GM10248 (cell line): ENCODE measurements at regions of chr7 and their contacts with region 1.

Region 1: GRCh38 chr7:143901668-143902331 is at the start of gene TCAF1:
- DNase-seq: peak; percentile 97
- CTCF ChIP-seq: peak; percentile 30

Region 2: GRCh38 chr7:143733876-143734275 is 167.9 kb before region 1 on chr7:
- CTCF ChIA-PET with region 1: no interaction called
- POLR2A ChIA-PET with region 1: no interaction called
- DNase-seq: no peak
- CTCF ChIP-seq: no peak

Region 3: DNA sequence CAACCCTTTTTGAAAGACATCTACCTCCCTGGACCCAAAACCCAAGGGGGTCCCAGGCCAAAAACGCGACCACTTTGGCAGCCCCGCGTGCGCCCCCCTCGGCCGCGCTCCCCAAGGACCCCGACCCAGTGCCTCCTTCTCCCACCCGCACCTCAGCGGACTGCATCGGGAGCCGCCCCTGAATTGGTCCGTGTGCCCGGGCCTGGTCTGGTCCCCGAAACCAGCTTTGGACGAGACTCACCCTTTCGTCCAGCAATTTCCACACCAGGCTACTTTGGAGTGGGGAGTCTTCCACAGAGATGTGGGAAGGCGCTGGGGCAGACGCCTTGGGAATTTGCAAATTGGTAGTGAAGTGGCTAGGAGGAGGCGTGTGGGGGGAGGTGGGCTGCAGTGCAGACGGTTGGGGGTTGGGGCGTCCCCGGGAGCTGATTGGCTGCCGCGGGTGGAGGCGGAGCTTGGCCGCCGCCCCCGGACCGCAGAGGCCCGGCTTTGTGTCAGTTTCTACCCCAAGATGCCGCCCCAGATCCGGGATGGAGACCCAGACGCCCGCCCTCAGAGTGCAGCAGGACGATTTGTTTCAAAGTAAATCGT is 16.7 kb before region 1 on chr7:
- CTCF ChIA-PET with region 1: interaction called, 28 read pairs
- POLR2A ChIA-PET with region 1: interaction called, 3 read pairs
- DNase-seq: peak; percentile 87
- CTCF ChIP-seq: no peak

Region 4: GRCh38 chr7:143929224-143929920 is 27.6 kb after region 1 on chr7:
- CTCF ChIA-PET with region 1: no interaction called
- POLR2A ChIA-PET with region 1: no interaction called
- DNase-seq: no peak
- CTCF ChIP-seq: no peak